SK-N-SH (cell line): ENCODE measurements at regions of chr17 and their contacts with region 1.

Region 1: DNA sequence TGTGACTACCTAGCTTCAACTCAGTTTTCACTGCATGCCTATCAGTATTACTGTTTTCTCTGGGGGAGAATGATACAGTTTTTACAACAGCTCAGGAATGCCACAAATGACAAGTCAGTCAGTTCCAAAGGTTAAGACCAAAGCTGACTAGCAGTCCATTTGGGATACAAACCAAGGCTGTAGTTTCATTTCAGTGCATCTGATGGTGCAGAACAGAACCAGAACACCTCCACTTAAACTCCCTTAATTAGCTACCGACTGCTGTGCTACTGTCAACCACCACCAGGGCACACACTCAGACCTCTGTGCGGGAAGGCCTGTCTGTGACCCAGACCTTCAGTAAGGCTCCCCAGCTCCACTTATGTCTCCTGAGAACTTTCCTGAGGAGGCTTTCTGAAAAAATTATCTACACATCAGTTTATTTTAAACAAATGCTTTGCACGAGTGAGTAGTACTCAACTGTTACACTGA is 20.4 kb downstream of the NFE2L1 start:
- DNase-seq: no peak
- H3K4me3 ChIP-seq: no peak overlapping the region
- H3K27ac ChIP-seq: 0 out of 4 replicates have a peak overlapping the region, but pooled peaks of 1 of the 2 experiments have one; percentile 10
- H3K4me1 ChIP-seq: no peaks in the 10 kb centered on the region; a peak in 2 of 4 replicates
- H3K27me3 ChIP-seq: no peaks in the 10 kb centered on the region
- CTCF ChIP-seq: peak; percentile 62
- EP300 ChIP-seq: no peak
- RAD21 ChIP-seq: 0 out of 2 replicates have a peak, but pooled peaks have one; percentile 7

Region 2: GRCh38 chr17:48054238-48055185 is 14.0 kb before region 1 on chr17:
- CTCF ChIA-PET with region 1: interaction called, 449 read pairs
- POLR2A ChIA-PET with region 1: interaction called, 7 read pairs
- DNase-seq: peak; percentile 97
- H3K4me3 ChIP-seq: peak overlapping the region; percentile 29 to 42
- H3K27ac ChIP-seq: peak overlapping the region; percentile 88 to 95; a peak in 3 of 4 replicates
- H3K4me1 ChIP-seq: peaks cover 58 to 67% of the 10 kb centered on the region in 2 experiments
- H3K27me3 ChIP-seq: no peaks in the 10 kb centered on the region
- CTCF ChIP-seq: no peak
- EP300 ChIP-seq: peak in 1 of 2 experiments; percentile 42; a peak in 1 of 4 replicates
- RAD21 ChIP-seq: no peak

Region 3: DNA sequence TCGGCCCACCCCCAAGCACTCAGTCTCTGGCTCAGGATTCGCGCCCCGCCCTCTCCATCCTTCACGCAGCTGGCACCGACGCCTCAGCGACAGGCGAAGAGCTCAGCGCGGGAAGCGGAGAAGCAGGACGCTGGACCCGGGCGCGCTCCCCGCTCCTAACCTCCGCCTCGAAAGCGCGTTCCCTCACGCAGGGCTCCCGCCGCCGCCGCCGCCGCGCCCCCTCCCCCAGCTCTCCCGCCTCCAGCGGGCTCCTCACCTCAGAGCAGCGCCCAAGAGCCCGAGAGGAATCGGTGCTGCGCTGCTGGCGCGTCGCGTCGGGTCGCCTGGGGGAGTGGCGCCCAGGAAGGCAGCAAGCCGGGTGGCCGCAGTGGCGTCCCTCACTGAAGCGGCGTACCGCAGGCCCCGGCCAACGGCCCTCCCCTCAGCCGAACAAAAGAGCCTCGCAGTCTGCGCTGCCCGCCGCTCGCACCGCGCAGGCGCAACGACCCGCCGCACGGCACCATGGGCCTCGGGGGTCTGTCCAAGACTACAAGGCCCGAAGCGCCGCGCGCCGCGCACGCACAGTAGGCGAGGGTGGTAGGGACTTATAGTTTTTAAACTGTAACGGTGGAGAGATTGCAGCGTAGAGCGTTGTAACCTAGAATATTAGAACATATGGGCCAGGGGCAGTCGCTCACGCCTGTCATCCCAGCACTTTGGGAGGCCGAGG is 32.6 kb after region 1 on chr17 and contains the start of gene CBX1:
- CTCF ChIA-PET with region 1: interaction called, 241 read pairs
- POLR2A ChIA-PET with region 1: no interaction called
- DNase-seq: peak; percentile 98
- H3K4me3 ChIP-seq: peak within 1 kb of the TSS; percentile 66 to 90
- H3K27ac ChIP-seq: peak within 1 kb of the TSS; percentile 81 to 91
- H3K4me1 ChIP-seq: peaks cover 3 to 6% of the 10 kb centered on the region in 2 experiments; a peak in 2 of 4 replicates
- H3K27me3 ChIP-seq: no peaks in the 10 kb centered on the region
- CTCF ChIP-seq: no peak; the same call in 1 of the 2 replicates
- EP300 ChIP-seq: no peak; a peak in 1 of 4 replicates
- RAD21 ChIP-seq: no peak
- polyA plus RNA-seq, gene CBX1: 102 and 112 TPM in 2 replicates

Region 4: GRCh38 chr17:48213797-48214196 is 145.3 kb after region 1 on chr17:
- CTCF ChIA-PET with region 1: no interaction called
- POLR2A ChIA-PET with region 1: no interaction called
- DNase-seq: no peak
- H3K4me3 ChIP-seq: no peak overlapping the region
- H3K27ac ChIP-seq: no peak overlapping the region
- H3K4me1 ChIP-seq: no peaks in the 10 kb centered on the region
- H3K27me3 ChIP-seq: peaks cover 79% of the 10 kb centered on the region
- CTCF ChIP-seq: no peak
- EP300 ChIP-seq: no peak
- RAD21 ChIP-seq: no peak